Activated B cell treated with CpG ODN at 0.5 μM for 24 hours (primary cell): ENCODE measurements at regions of chr10 and their contacts with region 1.

Region 1: GRCh38 chr10:80078448-80079311 is at the start of gene TMEM254:
- DNase-seq: peak; percentile 85
- ATAC-seq: peak; percentile 86
- H3K4me3 Mint-ChIP-seq: peak within 1 kb of the TSS; percentile 97
- H3K27ac Mint-ChIP-seq: peak within 1 kb of the TSS; percentile 91
- H3K4me1 Mint-ChIP-seq: peaks cover 20% of the 10 kb centered on the region
- H3K27me3 Mint-ChIP-seq: no peaks in the 10 kb centered on the region
- CTCF ChIP-seq: no peak
- total RNA-seq, gene TMEM254: 14.7 and 16.2 TPM in 2 replicates

Region 2: DNA sequence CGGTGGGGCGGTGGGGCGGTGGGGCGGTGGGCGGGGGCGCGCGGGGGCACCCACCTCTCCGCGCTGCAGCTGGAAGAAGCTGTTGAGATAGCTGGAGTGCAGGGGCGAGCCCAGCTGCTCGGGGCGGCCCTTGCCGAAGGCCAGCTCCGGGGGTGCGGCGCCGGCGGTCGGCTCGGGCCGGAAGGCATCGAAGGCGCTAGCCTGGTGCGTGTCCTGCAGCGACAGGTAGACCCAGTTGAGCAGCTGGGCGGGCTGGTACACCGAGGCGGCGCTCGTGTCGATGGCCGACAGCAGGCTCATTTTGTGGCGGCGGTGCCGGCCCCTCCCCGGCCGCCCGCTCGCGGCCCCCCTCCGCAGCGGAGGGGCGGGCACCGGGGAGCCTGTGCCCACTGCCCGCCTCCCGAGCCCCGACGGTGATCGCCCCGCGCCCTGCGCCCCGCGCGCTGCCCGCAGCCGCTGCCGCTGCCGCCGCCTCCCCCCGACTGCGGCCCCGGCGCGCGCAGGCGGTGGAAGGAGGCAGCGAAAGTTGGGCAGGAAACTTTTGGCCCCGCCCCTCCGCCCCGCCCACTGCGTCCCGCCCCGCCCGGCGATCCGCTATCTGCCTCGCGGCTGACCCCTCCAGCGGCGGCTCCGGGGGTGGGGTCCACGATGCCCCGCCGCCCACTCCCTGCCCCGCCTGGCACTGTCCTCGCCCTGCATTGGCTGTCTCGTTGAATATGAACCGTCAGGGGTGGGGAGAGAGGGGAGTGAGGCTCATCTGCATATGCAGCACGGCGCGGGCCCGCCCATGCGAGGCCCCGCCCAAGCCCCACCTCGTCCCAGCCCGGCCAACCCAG is 633.3 kb before region 1 on chr10 and contains the start of gene ZCCHC24:
- CTCF ChIA-PET with region 1: no interaction called
- POLR2A ChIA-PET with region 1: no interaction called
- intact Hi-C with region 1: loop called (anchors 5 kb)
- DNase-seq: peak; percentile 92
- ATAC-seq: peak; percentile 93
- H3K4me3 Mint-ChIP-seq: peak within 1 kb of the TSS; percentile 87
- H3K27ac Mint-ChIP-seq: peak within 1 kb of the TSS; percentile 50
- H3K4me1 Mint-ChIP-seq: peaks cover 26% of the 10 kb centered on the region
- H3K27me3 Mint-ChIP-seq: peaks cover 2% of the 10 kb centered on the region
- CTCF ChIP-seq: no peak
- total RNA-seq, gene ZCCHC24: 1.1 and 1.3 TPM in 2 replicates

Region 3: GRCh38 chr10:79472951-79473350 is 605.7 kb before region 1 on chr10:
- CTCF ChIA-PET with region 1: no interaction called
- POLR2A ChIA-PET with region 1: no interaction called
- intact Hi-C with region 1: no loop called
- DNase-seq: no peak
- ATAC-seq: no peak
- H3K4me3 Mint-ChIP-seq: no peak overlapping the region
- H3K27ac Mint-ChIP-seq: no peak overlapping the region
- H3K4me1 Mint-ChIP-seq: no peaks in the 10 kb centered on the region
- H3K27me3 Mint-ChIP-seq: peaks cover 17% of the 10 kb centered on the region
- CTCF ChIP-seq: no peak

Region 4: DNA sequence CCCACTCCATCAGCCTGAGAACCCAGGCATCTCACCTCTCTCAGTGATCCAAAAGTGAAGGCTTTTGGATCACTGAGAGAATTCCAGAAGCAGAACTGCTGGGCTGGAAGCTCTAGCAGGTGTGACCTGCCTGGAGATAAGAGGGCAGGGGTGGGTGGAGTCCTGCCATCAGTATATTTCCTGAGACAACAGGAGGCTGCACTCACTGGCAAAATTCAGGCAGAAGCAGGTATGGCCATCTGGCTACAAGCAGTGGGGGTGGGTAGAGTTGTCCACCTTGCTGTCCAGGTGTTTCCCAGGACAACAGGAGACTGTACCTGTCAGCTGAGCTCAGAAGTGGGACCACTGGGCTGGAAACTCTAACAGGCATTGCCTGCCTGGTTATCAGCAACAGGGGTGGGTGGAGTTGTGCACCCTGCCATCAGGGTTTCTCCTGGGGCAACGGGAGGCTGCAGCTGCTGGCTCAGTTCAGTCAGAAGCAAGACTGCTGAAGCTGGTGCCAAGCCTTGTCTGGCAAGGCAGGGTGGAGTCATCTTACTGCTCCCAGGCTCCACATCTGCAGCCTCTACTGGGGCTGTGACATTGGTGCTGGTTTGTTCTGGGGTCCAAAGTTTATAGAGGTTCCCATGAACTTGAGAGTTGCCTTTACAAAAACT is 82.6 kb before region 1 on chr10:
- CTCF ChIA-PET with region 1: no interaction called
- POLR2A ChIA-PET with region 1: no interaction called
- intact Hi-C with region 1: no loop called
- DNase-seq: no peak
- ATAC-seq: no peak
- H3K4me3 Mint-ChIP-seq: no peak overlapping the region
- H3K27ac Mint-ChIP-seq: no peak overlapping the region
- H3K4me1 Mint-ChIP-seq: no peaks in the 10 kb centered on the region
- H3K27me3 Mint-ChIP-seq: peaks cover 19% of the 10 kb centered on the region
- CTCF ChIP-seq: no peak

Region 5: GRCh38 chr10:80064120-80064886 is 14.4 kb before region 1 on chr10:
- CTCF ChIA-PET with region 1: interaction called, 7 read pairs
- POLR2A ChIA-PET with region 1: interaction called, 3 read pairs
- intact Hi-C with region 1: loop called (anchors 2 kb)
- DNase-seq: no peak
- ATAC-seq: no peak
- H3K4me3 Mint-ChIP-seq: no peak overlapping the region
- H3K27ac Mint-ChIP-seq: no peak overlapping the region
- H3K4me1 Mint-ChIP-seq: no peaks in the 10 kb centered on the region
- H3K27me3 Mint-ChIP-seq: no peaks in the 10 kb centered on the region
- CTCF ChIP-seq: no peak

Region 6: DNA sequence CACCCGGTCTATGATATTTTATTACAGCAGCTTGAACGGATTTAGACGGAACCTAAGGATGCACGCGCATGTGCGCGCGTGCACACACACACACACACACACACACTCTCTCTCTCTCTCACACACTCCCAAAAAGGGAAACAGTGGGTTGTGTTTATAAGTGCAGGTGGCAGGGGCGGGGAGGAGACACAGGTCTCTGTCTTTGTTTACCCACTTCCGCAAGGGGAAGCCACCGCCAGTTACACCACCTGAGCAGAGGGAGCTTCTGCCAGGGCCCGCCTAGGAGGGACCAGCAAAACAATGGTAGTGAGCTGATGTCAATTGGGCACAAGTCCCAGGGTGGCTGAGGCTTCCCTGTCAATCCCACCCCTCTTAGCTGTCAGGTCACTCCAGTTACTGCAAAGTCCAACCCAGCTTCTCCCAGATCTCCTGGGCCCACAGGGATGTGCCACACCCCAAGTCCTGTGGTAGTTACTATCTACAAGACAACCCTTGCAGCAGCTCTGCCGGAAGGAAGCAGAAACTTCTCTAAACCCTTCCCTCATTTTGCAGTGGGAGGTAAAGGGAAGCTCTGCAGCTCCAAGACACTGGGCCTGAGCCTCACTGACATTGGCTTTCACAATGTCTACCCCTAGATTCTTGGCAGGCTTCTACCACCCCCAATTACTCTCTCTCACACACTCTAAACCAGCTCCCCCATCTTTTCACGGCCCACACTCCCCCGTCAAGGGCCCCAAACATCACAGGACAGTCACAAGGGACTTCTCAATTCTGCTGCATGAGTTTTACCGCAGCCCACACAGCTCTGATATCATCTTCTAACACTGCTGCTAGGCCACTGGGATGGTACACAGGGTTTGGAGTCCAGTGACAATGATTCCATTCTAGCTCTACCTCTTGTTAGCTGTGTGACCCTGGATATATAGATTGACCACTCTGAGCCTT is 109.1 kb after region 1 on chr10:
- CTCF ChIA-PET with region 1: no interaction called
- POLR2A ChIA-PET with region 1: interaction called, 10 read pairs
- intact Hi-C with region 1: loop called (anchors 5 kb)
- DNase-seq: peak; percentile 57
- ATAC-seq: peak; percentile 91
- H3K4me3 Mint-ChIP-seq: peak overlapping the region; percentile 68
- H3K27ac Mint-ChIP-seq: peak overlapping the region; percentile 91
- H3K4me1 Mint-ChIP-seq: peaks cover 82% of the 10 kb centered on the region
- H3K27me3 Mint-ChIP-seq: no peaks in the 10 kb centered on the region
- CTCF ChIP-seq: no peak

Region 7: DNA sequence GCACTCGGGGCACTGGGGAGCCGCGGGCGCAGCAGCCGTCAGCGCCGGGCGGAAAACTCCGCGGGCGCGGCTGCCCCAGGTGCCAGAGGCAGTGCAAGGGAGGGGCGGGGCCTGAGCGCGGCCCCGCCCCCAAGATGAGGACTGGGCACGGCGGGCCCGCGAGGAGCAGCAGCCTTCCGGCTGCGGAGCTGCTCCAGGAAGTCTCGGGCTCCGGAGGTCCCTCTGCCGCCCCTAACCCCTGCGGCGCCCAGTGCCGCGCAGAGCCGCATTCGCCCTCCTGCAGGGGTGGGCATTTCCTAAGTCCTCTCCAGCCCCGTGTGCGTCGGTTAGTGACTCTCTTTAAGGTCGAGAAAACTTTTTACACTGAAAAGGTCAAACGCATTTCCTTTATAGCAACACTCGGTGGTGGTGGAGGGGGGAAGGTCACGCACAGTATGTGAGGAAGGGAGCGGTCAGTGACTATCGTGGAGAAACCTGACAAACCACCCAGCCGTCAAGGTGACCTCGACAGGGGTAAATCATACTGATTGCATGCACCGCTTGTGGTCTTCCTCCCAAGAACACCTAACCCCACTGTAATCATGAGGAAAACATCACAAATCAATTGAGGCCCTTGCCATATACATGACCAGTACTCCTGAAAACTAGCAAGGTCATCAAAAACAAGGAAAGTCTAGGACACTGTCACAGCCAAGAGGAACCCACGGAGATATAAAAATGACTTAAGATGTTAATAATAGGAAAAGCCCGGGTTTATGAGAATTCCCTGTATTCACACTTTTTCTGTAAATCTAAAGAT is 127.0 kb after region 1 on chr10 and contains the start of gene ANXA11:
- CTCF ChIA-PET with region 1: no interaction called
- POLR2A ChIA-PET with region 1: interaction called, 9 read pairs
- intact Hi-C with region 1: loop called (anchors 1 kb)
- DNase-seq: peak; percentile 80
- ATAC-seq: peak; percentile 84
- H3K4me3 Mint-ChIP-seq: peak within 1 kb of the TSS; percentile 83
- H3K27ac Mint-ChIP-seq: peak within 1 kb of the TSS; percentile 92
- H3K4me1 Mint-ChIP-seq: peaks cover 51% of the 10 kb centered on the region
- H3K27me3 Mint-ChIP-seq: no peaks in the 10 kb centered on the region
- CTCF ChIP-seq: no peak
- total RNA-seq, gene ANXA11: 178 and 190 TPM in 2 replicates

Region 8: GRCh38 chr10:80453701-80454513 is 375.2 kb after region 1 on chr10 and contains the start of gene TSPAN14:
- CTCF ChIA-PET with region 1: no interaction called
- POLR2A ChIA-PET with region 1: no interaction called
- intact Hi-C with region 1: loop called (anchors 1 kb)
- DNase-seq: peak; percentile 73
- ATAC-seq: peak; percentile 77
- H3K4me3 Mint-ChIP-seq: peak within 1 kb of the TSS; percentile 95
- H3K27ac Mint-ChIP-seq: peak within 1 kb of the TSS; percentile 89
- H3K4me1 Mint-ChIP-seq: peaks cover 50% of the 10 kb centered on the region
- H3K27me3 Mint-ChIP-seq: no peaks in the 10 kb centered on the region
- CTCF ChIP-seq: no peak
- total RNA-seq, gene TSPAN14: 18.9 and 20.7 TPM in 2 replicates